ENCODE measurements at regions of chr12 and their contacts with region 1.

Region 1: DNA sequence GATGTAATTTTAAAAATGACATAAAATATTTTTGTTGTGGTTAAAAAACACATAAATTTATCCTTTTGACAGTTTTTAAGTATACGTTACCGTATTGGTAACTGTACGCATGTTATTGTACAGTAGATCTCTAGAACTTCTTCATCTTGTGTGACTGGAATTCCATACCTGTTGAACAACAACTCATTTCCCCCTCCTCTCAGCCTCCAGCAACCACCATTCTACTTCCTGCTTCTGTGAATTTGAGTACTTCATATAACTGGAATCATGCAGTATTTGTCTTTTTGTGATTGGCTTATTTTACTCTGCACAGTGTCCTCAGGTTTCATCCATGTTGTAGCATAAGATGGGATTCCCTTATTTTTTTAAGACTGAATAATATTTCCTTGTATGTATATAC is 113.6 kb upstream of the ATF1 start:
- DNase-seq: no peak
- ATAC-seq: no peak
- H3K4me3 Mint-ChIP-seq: no peak overlapping the region
- H3K27ac Mint-ChIP-seq: no peak overlapping the region
- H3K4me1 Mint-ChIP-seq: peaks cover 8% of the 10 kb centered on the region
- H3K27me3 Mint-ChIP-seq: no peaks in the 10 kb centered on the region

Region 2: GRCh38 chr12:50637870-50638481 is 12.3 kb before region 1 on chr12:
- CTCF ChIA-PET with region 1: interaction called, 11 read pairs
- POLR2A ChIA-PET with region 1: no interaction called
- DNase-seq: no peak
- ATAC-seq: no peak
- H3K4me3 Mint-ChIP-seq: no peak overlapping the region
- H3K27ac Mint-ChIP-seq: no peak overlapping the region
- H3K4me1 Mint-ChIP-seq: peaks cover 25% of the 10 kb centered on the region
- H3K27me3 Mint-ChIP-seq: no peaks in the 10 kb centered on the region